Astrocyte of the cerebellum (primary cell): ENCODE measurements at regions of chr12 and their contacts with region 1.

Region 1: GRCh38 chr12:54958048-54958658 is 26.4 kb downstream of the TESPA1 start:
- DNase-seq: peak; percentile 47
- H3K4me3 ChIP-seq: no peak overlapping the region
- CTCF ChIP-seq: peak; percentile 63

Region 2: GRCh38 chr12:54759751-54760150 is 198.4 kb before region 1 on chr12:
- in situ Hi-C with region 1: loop called (anchors 25 kb)
- DNase-seq: no peak
- H3K4me3 ChIP-seq: no peak overlapping the region
- CTCF ChIP-seq: peak; percentile 12

Region 3: DNA sequence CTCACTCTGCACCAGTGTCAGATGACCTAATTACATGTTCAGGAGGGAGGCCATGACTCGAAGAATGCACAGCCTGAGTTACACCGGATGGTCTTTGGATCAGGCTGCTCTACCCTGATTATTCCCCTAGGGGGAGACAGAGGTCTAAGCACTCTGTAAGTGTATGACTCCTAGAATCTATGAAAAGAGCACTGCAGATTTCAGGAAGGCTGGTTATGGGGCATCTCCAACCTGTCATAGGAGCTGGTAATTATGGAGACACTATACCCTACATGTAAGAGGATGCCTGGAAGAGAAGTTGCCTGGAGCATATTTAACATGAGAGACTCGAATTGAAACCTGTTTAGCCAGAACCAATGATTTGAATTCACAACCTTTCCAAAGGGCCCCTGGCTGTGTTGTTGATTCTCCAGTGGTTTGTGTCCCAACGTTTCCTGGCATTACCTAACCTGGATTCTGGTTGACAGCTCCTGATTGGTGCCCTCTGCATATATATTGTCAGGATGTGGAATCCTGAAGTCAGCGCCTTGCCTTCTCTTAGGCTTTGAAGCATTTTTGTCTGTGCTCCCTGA is 104.1 kb before region 1 on chr12 and contains the start of gene MUCL1:
- in situ Hi-C with region 1: loop called (anchors 25 kb)
- DNase-seq: peak; percentile 31
- H3K4me3 ChIP-seq: no peak within 1 kb of the TSS
- CTCF ChIP-seq: peak; percentile 95

Region 4: GRCh38 chr12:54917001-54917488 is 41.1 kb before region 1 on chr12:
- in situ Hi-C with region 1: no loop called
- DNase-seq: no peak
- H3K4me3 ChIP-seq: no peak overlapping the region
- CTCF ChIP-seq: no peak